Endothelial cell of umbilical vein (primary cell): ENCODE measurements at regions of chr20 and their contacts with region 1.

Region 1: DNA sequence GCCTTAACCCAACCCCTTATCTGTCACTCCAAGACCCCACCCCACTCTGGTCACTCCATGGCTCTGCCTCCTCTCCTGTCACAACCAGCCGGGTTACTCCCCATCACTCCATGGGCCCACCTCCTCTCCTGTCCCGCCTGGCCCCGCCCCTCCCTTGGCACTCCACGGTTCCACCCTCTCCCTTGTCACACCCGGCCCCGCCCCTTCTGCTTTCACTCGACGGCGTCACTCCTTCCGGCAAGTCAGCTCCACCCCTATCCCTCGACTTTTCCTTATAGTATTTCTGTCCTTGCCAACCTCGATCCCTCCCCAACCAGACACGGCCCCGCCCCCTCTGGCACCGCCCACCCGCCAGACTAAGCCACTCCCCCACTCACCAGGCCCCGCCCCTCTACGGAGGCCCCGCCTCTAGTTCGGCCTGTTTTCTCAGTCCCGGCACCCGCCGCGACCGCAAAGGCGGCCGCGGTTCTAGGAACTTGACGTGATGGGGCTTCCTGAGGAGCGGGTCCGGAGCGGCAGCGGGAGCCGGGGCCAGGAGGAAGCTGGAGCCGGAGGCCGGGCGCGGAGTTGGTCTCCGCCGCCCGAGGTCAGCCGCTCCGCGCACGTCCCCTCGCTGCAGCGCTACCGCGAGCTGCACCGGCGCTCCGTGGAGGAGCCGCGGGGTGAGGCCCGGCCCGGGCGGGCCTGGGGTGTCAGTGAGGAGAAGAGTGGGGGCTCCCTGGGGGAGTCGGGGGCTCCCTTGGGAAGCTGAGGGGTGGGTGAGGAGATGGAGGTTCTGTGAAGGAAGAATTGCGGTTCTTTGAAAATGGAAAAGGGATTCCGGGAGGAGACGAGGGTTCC is at the start of gene ACSS2:
- DNase-seq: peak; percentile 99
- H3K4me3 ChIP-seq: peak within 1 kb of the TSS; percentile 72 to 89 (median 89)
- H3K27ac ChIP-seq: peak within 1 kb of the TSS; percentile 6
- H3K4me1 ChIP-seq: peaks cover 12% of the 10 kb centered on the region
- H3K27me3 ChIP-seq: no peaks in the 10 kb centered on the region
- CTCF ChIP-seq: no peak
- POLR2A ChIP-seq: peak; percentile 79
- total RNA-seq, gene ACSS2: 40.7 and 48.5 TPM in 2 replicates

Region 2: GRCh38 chr20:34538671-34539123 is 337.7 kb before region 1 on chr20:
- CTCF ChIA-PET with region 1: no interaction called
- POLR2A ChIA-PET with region 1: no interaction called
- dilution Hi-C with region 1: no loop called
- intact Hi-C with region 1: no loop called
- DNase-seq: peak; percentile 45
- H3K4me3 ChIP-seq: no peak overlapping the region
- H3K27ac ChIP-seq: no peak overlapping the region
- H3K4me1 ChIP-seq: no peaks in the 10 kb centered on the region
- H3K27me3 ChIP-seq: no peaks in the 10 kb centered on the region
- CTCF ChIP-seq: peak; percentile 75 to 87
- POLR2A ChIP-seq: no peak

Region 3: DNA sequence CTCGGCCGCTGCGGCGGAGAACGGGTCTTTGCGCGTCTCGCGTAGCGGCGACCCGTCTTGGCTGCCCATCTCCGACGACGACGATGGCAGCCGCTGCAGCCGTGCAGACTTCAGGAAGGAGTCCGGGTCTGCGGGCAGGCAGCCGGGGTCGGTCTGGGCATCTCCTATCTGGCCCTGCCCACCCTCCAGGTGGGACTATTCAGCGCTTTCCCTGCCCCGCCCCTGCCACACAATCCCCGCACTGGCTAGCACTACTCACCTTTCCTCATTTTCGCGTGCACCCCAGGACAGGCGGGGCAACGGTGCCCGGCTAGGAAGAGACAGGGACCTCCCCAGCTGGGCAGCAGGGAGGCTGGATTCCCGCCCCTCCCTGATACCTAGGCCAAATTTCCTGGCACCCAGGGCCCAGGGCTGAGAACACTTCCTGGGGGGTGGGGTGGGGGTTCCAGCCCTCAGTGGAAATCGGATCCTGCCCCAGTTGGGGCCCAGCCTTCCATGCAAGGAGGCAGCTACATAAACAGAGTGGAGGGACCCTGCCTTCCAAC is 12.9 kb before region 1 on chr20:
- CTCF ChIA-PET with region 1: interaction called, 27 read pairs
- POLR2A ChIA-PET with region 1: no interaction called
- dilution Hi-C with region 1: no loop called
- intact Hi-C with region 1: no loop called
- DNase-seq: no peak
- H3K4me3 ChIP-seq: no peak overlapping the region
- H3K27ac ChIP-seq: no peak overlapping the region
- H3K4me1 ChIP-seq: no peaks in the 10 kb centered on the region
- H3K27me3 ChIP-seq: no peaks in the 10 kb centered on the region
- CTCF ChIP-seq: no peak
- POLR2A ChIP-seq: no peak

Region 4: GRCh38 chr20:34948030-34948429 is 71.6 kb after region 1 on chr20:
- CTCF ChIA-PET with region 1: interaction called, 21 read pairs
- POLR2A ChIA-PET with region 1: no interaction called
- dilution Hi-C with region 1: no loop called
- intact Hi-C with region 1: no loop called
- DNase-seq: no peak
- H3K4me3 ChIP-seq: no peak overlapping the region
- H3K27ac ChIP-seq: no peak overlapping the region
- H3K4me1 ChIP-seq: peaks cover 3% of the 10 kb centered on the region
- H3K27me3 ChIP-seq: no peaks in the 10 kb centered on the region
- CTCF ChIP-seq: no peak
- POLR2A ChIP-seq: no peak

Region 5: GRCh38 chr20:34983995-34984735 is 107.8 kb after region 1 on chr20:
- CTCF ChIA-PET with region 1: interaction called, 71 read pairs
- POLR2A ChIA-PET with region 1: no interaction called
- dilution Hi-C with region 1: no loop called
- intact Hi-C with region 1: no loop called
- DNase-seq: no peak
- H3K4me3 ChIP-seq: no peak overlapping the region
- H3K27ac ChIP-seq: no peak overlapping the region
- H3K4me1 ChIP-seq: no peaks in the 10 kb centered on the region
- H3K27me3 ChIP-seq: peaks cover 5% of the 10 kb centered on the region in 2 experiments
- CTCF ChIP-seq: no peak
- POLR2A ChIP-seq: no peak

Region 6: GRCh38 chr20:35021063-35021462 is 144.7 kb after region 1 on chr20:
- CTCF ChIA-PET with region 1: interaction called, 5 read pairs
- POLR2A ChIA-PET with region 1: no interaction called
- dilution Hi-C with region 1: no loop called
- intact Hi-C with region 1: loop called (anchors 1 kb)
- DNase-seq: peak; percentile 77
- H3K4me3 ChIP-seq: no peak overlapping the region
- H3K27ac ChIP-seq: peak overlapping the region; percentile 81
- H3K4me1 ChIP-seq: peaks cover 17% of the 10 kb centered on the region
- H3K27me3 ChIP-seq: no peaks in the 10 kb centered on the region
- CTCF ChIP-seq: no peak
- POLR2A ChIP-seq: no peak

Region 7: DNA sequence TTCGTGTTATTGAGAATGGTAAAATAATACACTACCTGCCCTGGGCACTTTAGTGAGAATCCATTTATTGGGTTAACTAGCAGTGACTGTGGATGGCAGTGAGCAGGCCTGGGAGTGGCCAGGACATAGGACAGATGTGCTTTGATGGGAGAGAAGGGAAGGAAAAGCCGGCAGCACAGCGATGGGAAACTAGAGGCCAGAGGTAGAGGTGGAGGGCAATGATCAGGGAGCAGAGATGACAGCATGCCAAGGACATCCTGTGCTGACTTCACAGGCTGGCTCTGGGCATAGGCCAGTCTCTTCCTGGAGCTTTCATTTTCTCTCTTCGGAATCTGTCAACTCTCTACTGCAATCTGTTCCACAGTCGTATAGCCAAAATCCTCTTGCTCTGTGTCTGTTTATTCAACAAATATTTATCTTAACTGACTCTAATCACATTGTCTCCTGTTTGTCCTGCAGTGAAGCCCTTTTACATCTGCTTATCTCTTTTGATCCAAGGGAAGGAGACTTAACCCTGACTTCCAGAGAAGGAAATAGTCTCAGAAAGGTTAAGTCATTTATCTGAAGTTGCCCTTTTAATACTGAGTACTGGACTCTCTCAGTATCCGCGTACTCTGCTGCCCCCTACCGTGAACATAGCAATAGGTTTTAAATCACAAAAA is 331.7 kb after region 1 on chr20:
- CTCF ChIA-PET with region 1: interaction called, 14 read pairs
- POLR2A ChIA-PET with region 1: no interaction called
- dilution Hi-C with region 1: no loop called
- intact Hi-C with region 1: loop called (anchors 2 kb)
- DNase-seq: peak; percentile 92
- H3K4me3 ChIP-seq: peak overlapping the region in 1 of 3 experiments; percentile 42
- H3K27ac ChIP-seq: peak overlapping the region; percentile 53
- H3K4me1 ChIP-seq: peaks cover 6% of the 10 kb centered on the region
- H3K27me3 ChIP-seq: no peaks in the 10 kb centered on the region
- CTCF ChIP-seq: peak; percentile 62 to 66
- POLR2A ChIP-seq: peak; percentile 16

Region 8: GRCh38 chr20:35629427-35630145 is 753.2 kb after region 1 on chr20:
- CTCF ChIA-PET with region 1: no interaction called
- POLR2A ChIA-PET with region 1: no interaction called
- dilution Hi-C with region 1: no loop called
- intact Hi-C with region 1: no loop called
- DNase-seq: no peak
- H3K4me3 ChIP-seq: no peak overlapping the region
- H3K27ac ChIP-seq: no peak overlapping the region
- H3K4me1 ChIP-seq: no peaks in the 10 kb centered on the region
- H3K27me3 ChIP-seq: no peaks in the 10 kb centered on the region
- CTCF ChIP-seq: no peak
- POLR2A ChIP-seq: no peak